ENCODE measurements at regions of chr10 and their contacts with region 1.

Region 1: DNA sequence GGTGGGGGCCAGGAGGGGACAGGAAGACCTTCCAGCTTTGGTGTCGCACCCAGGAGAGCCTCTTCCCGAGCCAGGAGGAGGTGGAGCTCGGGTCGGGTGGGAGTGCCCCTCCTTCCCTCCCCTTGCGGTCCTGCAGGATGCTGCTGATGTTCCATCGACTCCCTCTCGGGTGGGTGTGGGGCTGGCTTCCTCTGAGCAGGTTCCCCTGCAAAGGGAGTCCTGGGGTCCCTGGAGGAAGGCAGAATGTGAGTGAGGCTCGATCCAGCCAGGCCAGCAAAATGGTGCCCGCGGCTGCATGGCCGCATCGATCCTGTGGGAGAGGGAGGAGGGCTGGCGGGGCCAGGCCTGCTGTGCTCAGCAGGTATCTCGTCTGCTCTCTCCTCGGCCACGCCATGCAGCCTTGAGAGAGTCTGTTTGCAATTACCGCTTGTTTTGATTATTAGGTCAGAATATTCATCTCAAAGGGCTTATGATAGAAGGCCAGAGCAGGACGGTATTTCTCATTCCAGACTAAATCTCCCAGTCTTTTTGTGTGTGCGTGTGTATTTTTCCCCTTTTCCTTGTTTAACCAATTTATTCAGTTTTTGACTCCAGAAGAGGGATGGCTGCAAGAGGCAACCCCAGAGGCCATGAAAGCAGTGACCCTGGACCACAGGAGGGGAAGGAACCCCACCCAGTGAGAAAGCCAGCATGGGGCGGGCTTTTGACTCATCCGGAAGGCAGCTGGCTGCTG is 137.3 kb upstream of the ZMIZ1 start:
- DNase-seq: peak; percentile 72
- ATAC-seq: peak; percentile 84

Region 2: GRCh38 chr10:78047314-78047891 is 884.1 kb before region 1 on chr10:
- intact Hi-C with region 1: loop called (anchors 5 kb)
- DNase-seq: peak; percentile 91
- ATAC-seq: peak; percentile 87

Region 3: DNA sequence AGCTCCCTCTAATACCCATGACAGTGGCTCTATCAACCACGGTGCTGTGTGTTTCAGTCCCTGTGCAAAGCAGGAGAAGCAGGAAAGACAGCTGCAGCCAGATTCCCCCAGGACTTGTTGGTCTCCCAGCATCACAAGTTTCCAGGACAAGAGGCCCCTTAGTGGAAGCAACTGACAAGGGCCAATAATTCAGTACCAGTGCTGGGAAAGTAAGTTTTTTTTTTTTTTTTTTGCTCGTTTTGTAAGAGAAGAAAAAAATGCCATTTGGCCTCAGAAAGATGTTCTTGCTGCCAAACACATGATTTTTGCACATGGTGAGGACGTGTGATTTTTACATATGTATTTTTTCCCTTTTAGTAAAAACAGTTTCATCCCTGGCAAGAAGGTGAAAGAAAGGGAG is 146.9 kb before region 1 on chr10:
- intact Hi-C with region 1: no loop called
- DNase-seq: no peak
- ATAC-seq: peak; percentile 23

Region 4: DNA sequence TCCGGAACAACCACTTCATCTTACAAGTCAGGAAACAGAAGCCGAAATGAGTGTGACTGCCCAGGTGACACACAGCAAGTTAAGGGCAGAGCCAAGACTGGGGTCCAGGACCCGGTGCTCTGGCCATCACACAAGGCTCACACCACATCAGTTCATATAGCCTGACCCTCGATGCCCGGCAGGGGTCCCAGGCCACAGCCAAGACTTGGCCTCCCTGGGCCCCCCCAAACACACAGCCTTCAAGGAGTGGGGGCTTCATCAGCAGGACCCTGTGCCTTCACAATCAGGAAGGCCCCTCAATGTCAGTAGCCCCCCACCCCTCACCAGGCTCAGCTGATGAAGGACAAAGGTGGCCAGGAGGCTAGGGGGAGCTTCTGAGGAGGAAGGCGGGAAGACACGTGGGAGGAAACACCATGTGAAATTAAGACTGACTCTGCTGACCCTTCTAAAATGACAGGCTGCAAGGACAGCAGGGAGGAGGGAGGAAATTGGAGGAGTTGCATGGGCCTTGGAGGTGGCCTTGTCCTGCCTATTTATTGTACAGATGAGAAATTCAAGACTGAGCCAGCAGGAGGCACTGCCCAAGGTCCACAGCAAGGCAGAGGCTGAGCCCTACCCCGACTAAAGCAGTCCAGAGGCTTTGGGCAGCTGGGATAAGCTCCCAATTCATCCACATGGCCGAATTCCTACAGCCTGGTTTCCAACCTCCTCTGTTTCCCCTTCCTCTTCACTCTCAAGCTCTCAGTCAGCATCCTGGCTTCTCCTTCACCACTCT is 78.8 kb before region 1 on chr10:
- intact Hi-C with region 1: no loop called
- DNase-seq: no peak
- ATAC-seq: no peak

Measured in left ventricle myocardium superior (tissue), 1 donor.